ENCODE measurements at regions of chr19 and their contacts with region 1.

Region 1: DNA sequence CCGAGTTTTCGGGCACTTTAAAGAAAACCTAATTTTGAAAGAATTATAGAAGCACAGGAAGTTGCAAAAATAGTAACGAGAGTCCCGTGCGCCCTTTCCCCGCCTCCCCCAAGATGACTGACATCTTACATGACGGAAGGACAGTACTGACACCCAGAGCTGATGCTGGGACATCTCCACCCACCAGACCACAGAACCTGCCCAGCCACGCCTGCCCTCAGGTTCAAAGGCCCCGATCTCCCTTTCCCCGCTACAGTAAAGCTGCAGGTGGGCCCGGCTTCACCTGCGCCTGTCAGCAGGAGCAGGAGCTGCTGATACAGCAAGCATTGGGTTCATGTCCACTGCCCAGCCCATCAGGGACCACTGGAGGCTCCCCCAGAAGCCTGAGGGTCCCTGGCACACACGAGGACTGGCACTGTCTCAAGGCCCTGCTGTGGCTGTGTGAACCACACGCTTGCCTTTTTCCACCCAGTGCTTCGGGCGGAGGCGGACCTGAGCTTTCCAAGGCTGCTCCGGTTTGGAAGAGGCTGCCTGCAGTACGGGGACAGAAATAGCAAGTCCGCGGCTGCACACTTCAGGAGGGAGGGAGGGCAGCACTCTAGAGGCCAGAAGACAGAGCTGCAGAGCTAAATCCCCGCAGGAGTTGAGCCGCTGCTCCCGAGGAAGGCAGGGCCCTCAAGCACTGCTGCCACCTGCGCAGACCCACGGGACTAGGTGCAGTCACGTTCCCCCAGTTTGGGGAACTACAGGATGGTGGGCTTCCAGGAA is 8.7 kb downstream of the MAP2K2 start:
- DNase-seq: no peak
- H3K4me3 ChIP-seq: no peak overlapping the region
- H3K27ac ChIP-seq: no peak overlapping the region
- H3K4me1 ChIP-seq: no peaks in the 10 kb centered on the region
- H3K27me3 ChIP-seq: no peaks in the 10 kb centered on the region
- CTCF ChIP-seq: no peak
- POLR2A ChIP-seq: no peak

Region 2: GRCh38 chr19:4077882-4078614 is 37.2 kb before region 1 on chr19:
- intact Hi-C with region 1: loop called (anchors 1 kb)
- DNase-seq: peak; percentile 42 to 70
- H3K4me3 ChIP-seq: peak overlapping the region; percentile 60 to 74 (median 66)
- H3K27ac ChIP-seq: peak overlapping the region; percentile 86 to 88
- H3K4me1 ChIP-seq: no peaks in the 10 kb centered on the region
- H3K27me3 ChIP-seq: no peaks in the 10 kb centered on the region
- CTCF ChIP-seq: no peak
- POLR2A ChIP-seq: no peak